Activated CD4-positive, alpha-beta T cell treated with anti-CD3 and anti-CD28 coated beads, Interleukin-2, amount 10 ng/mL, durations not matched to agents 24 days and 14 days (primary cell): ENCODE measurements at regions of chr7 and their contacts with region 1.

Region 1: GRCh38 chr7:56106108-56107073 is at the start of gene CHCHD2:
- DNase-seq: peak; percentile 98
- H3K4me3 Mint-ChIP-seq: peak within 1 kb of the TSS; percentile 95
- H3K27ac Mint-ChIP-seq: peak within 1 kb of the TSS; percentile 98
- H3K4me1 Mint-ChIP-seq: peaks cover 23% of the 10 kb centered on the region
- H3K27me3 Mint-ChIP-seq: no peaks in the 10 kb centered on the region
- total RNA-seq, gene CHCHD2: 627 and 634 TPM in 2 replicates

Region 2: GRCh38 chr7:54758702-54759592 is 1347.4 kb before region 1 on chr7 and contains the start of gene SEC61G:
- intact Hi-C with region 1: loop called (anchors 1 kb)
- DNase-seq: peak; percentile 99
- H3K4me3 Mint-ChIP-seq: peak within 1 kb of the TSS; percentile 97
- H3K27ac Mint-ChIP-seq: peak within 1 kb of the TSS; percentile 99
- H3K4me1 Mint-ChIP-seq: peaks cover 27% of the 10 kb centered on the region
- H3K27me3 Mint-ChIP-seq: peaks cover 14% of the 10 kb centered on the region
- total RNA-seq, gene SEC61G: 170 and 176 TPM in 2 replicates

Region 3: GRCh38 chr7:55951637-55952351 is 154.6 kb before region 1 on chr7 and contains the start of gene MRPS17:
- intact Hi-C with region 1: loop called (anchors 5 kb)
- DNase-seq: peak; percentile 98
- H3K4me3 Mint-ChIP-seq: peak within 1 kb of the TSS; percentile 98
- H3K27ac Mint-ChIP-seq: peak within 1 kb of the TSS; percentile 98
- H3K4me1 Mint-ChIP-seq: peaks cover 10% of the 10 kb centered on the region
- H3K27me3 Mint-ChIP-seq: no peaks in the 10 kb centered on the region
- total RNA-seq, gene MRPS17: 36.4 and 37.6 TPM in 2 replicates

Region 4: DNA sequence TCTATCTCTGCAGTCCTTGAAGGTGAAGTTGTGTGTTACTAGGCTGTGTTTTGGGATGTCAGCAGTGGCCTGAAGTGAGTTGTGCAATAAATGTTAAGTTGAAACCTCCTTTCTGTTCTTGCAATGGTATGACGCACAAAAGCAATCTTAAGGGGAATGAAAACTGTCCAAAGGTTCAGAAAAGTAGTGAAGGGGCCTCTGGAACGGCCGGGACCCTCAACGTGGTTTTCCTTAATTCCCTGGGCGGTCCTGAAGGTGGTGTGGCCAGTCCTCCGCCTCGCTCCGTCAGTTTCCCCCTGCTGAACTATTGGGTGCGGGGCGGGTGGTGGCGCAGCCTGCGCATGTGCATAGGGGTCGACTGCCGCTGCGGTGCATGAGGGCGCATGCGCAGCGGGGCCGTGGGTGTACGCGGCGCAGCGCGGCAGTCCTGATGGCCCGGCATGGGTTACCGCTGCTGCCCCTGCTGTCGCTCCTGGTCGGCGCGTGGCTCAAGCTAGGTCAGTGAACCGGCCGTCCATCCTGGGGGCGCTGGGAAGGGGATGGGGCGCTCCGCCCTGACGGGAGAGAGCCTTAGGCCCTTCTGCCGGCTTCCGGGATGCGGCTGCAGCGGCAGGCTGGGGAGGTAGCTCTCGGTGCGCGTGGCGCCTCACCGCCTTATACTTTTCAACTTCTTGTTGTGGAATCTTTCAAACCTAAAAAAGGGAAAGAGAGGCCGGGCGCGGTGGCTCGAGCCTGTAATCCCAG is 42.3 kb before region 1 on chr7 and contains the start of gene SUMF2:
- intact Hi-C with region 1: loop called (anchors 1 kb)
- DNase-seq: peak; percentile 97
- H3K4me3 Mint-ChIP-seq: peak within 1 kb of the TSS; percentile 94
- H3K27ac Mint-ChIP-seq: peak within 1 kb of the TSS; percentile 96
- H3K4me1 Mint-ChIP-seq: peaks cover 34% of the 10 kb centered on the region
- H3K27me3 Mint-ChIP-seq: peaks cover 2% of the 10 kb centered on the region
- total RNA-seq, gene SUMF2: 154 and 161 TPM in 2 replicates

Region 5: GRCh38 chr7:56199639-56200038 is 93.2 kb after region 1 on chr7:
- intact Hi-C with region 1: loop called (anchors 2 kb)
- DNase-seq: no peak
- H3K4me3 Mint-ChIP-seq: no peak overlapping the region
- H3K27ac Mint-ChIP-seq: no peak overlapping the region
- H3K4me1 Mint-ChIP-seq: no peaks in the 10 kb centered on the region
- H3K27me3 Mint-ChIP-seq: no peaks in the 10 kb centered on the region